ENCODE measurements at regions of chr17 and their contacts with region 1.

Region 1: DNA sequence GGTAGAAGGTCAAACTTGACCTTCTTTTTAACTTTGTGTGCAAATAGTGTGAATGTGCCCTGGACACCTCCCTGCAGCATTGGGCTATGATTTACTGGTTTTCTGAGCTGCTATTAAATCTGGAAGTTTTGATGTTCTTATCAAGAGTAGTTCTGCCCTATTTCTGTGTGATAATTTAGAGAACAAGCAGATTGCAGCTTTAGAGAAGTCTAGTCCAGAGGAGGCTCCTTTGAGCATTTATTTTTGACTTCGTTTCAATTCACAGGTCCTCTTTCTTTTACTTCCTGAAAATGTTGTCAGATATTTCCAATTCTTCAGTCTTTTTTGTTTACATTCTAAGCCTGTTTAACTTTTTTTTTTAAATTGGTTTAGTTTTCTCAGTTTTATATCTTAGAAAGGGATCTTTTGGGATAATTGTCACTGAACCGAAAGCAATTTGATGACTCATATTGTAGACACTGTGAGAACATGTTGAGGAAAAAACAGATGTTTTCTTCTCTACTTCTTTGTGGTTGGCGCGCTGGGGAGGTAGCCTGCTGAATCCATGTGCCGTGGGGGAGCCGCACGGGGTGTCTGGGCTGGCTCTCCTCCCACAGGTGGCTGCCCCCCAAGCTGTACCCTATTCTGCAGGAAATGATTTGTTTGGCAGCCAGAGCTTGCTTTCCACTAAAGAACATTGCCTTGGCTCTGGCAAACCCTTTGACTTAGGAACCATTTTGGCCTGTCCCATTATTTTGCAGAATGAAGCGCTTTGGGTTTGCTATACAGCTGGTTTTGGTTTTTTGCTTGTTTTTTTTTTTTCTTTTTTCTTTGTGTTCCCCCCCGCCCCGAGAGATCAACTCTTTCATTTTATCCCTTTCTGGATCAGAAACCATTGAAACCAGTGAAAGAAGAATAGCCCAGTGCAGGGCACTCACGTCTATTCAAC is 53.4 kb downstream of the MFSD11 start:
- DNase-seq: peak in 13 of 14 experiments; percentile 5 to 61 (median 42)
- ATAC-seq: peak; percentile 84
- H3K4me3 ChIP-seq: no peak overlapping the region
- H3K4me3 Mint-ChIP-seq: peak overlapping the region; percentile 8
- H3K27ac ChIP-seq: peak overlapping the region in 1 of 2 donors; percentile 5
- H3K27ac Mint-ChIP-seq: peak overlapping the region; percentile 45
- H3K4me1 ChIP-seq: peaks cover 11% of the 10 kb centered on the region
- H3K4me1 Mint-ChIP-seq: peaks cover 11% of the 10 kb centered on the region
- H3K27me3 ChIP-seq: no peaks in the 10 kb centered on the region
- H3K27me3 Mint-ChIP-seq: no peaks in the 10 kb centered on the region
- CTCF ChIP-seq: no peak

Region 2: GRCh38 chr17:76314392-76315227 is 476.7 kb before region 1 on chr17:
- CTCF ChIA-PET with region 1: no interaction called
- POLR2A ChIA-PET with region 1: no interaction called
- intact Hi-C with region 1: loop called in 1 of 2 experiments (anchors 5 kb)
- DNase-seq: no peak
- ATAC-seq: no peak
- H3K4me3 ChIP-seq: no peak overlapping the region
- H3K4me3 Mint-ChIP-seq: no peak overlapping the region
- H3K27ac ChIP-seq: no peak overlapping the region
- H3K27ac Mint-ChIP-seq: no peak overlapping the region
- H3K4me1 ChIP-seq: no peaks in the 10 kb centered on the region
- H3K4me1 Mint-ChIP-seq: peaks cover 7% of the 10 kb centered on the region
- H3K27me3 ChIP-seq: no peaks in the 10 kb centered on the region
- H3K27me3 Mint-ChIP-seq: no peaks in the 10 kb centered on the region
- CTCF ChIP-seq: no peak

Region 3: GRCh38 chr17:76753061-76753961 is 38.0 kb before region 1 on chr17:
- CTCF ChIA-PET with region 1: no interaction called
- POLR2A ChIA-PET with region 1: no interaction called
- intact Hi-C with region 1: loop called in 1 of 2 experiments (anchors 5 kb)
- DNase-seq: peak in 10 of 14 experiments; percentile 14 to 81 (median 30)
- ATAC-seq: peak; percentile 87
- H3K4me3 ChIP-seq: peak overlapping the region; percentile 54
- H3K4me3 Mint-ChIP-seq: peak overlapping the region; percentile 84
- H3K27ac ChIP-seq: peak overlapping the region; percentile 82 to 84
- H3K27ac Mint-ChIP-seq: peak overlapping the region; percentile 96
- H3K4me1 ChIP-seq: peaks cover 34% of the 10 kb centered on the region
- H3K4me1 Mint-ChIP-seq: peaks cover 24% of the 10 kb centered on the region
- H3K27me3 ChIP-seq: no peaks in the 10 kb centered on the region
- H3K27me3 Mint-ChIP-seq: no peaks in the 10 kb centered on the region
- CTCF ChIP-seq: no peak

Region 4: GRCh38 chr17:76968707-76969597 is 177.6 kb after region 1 on chr17:
- CTCF ChIA-PET with region 1: no interaction called
- POLR2A ChIA-PET with region 1: no interaction called
- intact Hi-C with region 1: no loop called
- DNase-seq: peak; percentile 20 to 76 (median 46)
- ATAC-seq: peak; percentile 78
- H3K4me3 ChIP-seq: peak overlapping the region; percentile 54
- H3K4me3 Mint-ChIP-seq: peak overlapping the region; percentile 82
- H3K27ac ChIP-seq: no peak overlapping the region
- H3K27ac Mint-ChIP-seq: peak overlapping the region; percentile 74
- H3K4me1 ChIP-seq: peaks cover 25% of the 10 kb centered on the region
- H3K4me1 Mint-ChIP-seq: peaks cover 28% of the 10 kb centered on the region
- H3K27me3 ChIP-seq: no peaks in the 10 kb centered on the region
- H3K27me3 Mint-ChIP-seq: peaks cover 4% of the 10 kb centered on the region
- CTCF ChIP-seq: no peak

Measured in CD4-positive, alpha-beta T cell (primary cell).